ENCODE measurements at regions of chr6 and their contacts with region 1.

Region 1: GRCh38 chr6:42652024-42652746 is 70.2 kb downstream of the PRPH2 start:
- DNase-seq: no peak
- H3K4me3 Mint-ChIP-seq: no peak overlapping the region
- H3K27ac Mint-ChIP-seq: no peak overlapping the region
- H3K4me1 Mint-ChIP-seq: no peaks in the 10 kb centered on the region
- H3K27me3 Mint-ChIP-seq: no peaks in the 10 kb centered on the region

Region 2: GRCh38 chr6:42572523-42572922 is 79.7 kb before region 1 on chr6:
- CTCF ChIA-PET with region 1: no interaction called
- POLR2A ChIA-PET with region 1: interaction called, 11 read pairs
- DNase-seq: peak; percentile 16
- H3K4me3 Mint-ChIP-seq: peak overlapping the region; percentile 46
- H3K27ac Mint-ChIP-seq: peak overlapping the region; percentile 82
- H3K4me1 Mint-ChIP-seq: peaks cover 51% of the 10 kb centered on the region
- H3K27me3 Mint-ChIP-seq: no peaks in the 10 kb centered on the region